Activated T-helper 2 cell treated with anti-CD3 and anti-CD28 coated beads, Interferon-gamma antibody, Interleukin-2, Interleukin-4, amounts not matched to agents 10 μg/mL and 5 μg/mL and 100 μg/mL, durations not matched to agents 14 hours and 24 hours and 36 hours (primary cell): ENCODE measurements at regions of chr5 and their contacts with region 1.

Region 1: GRCh38 chr5:112921833-112922817 is at the start of gene REEP5:
- DNase-seq: peak; percentile 84
- H3K4me3 Mint-ChIP-seq: peak within 1 kb of the TSS; percentile 93
- H3K27ac Mint-ChIP-seq: peak within 1 kb of the TSS; percentile 90
- H3K4me1 Mint-ChIP-seq: peaks cover 57% of the 10 kb centered on the region
- H3K27me3 Mint-ChIP-seq: no peaks in the 10 kb centered on the region
- total RNA-seq, gene REEP5: 83.4 and 85.6 TPM in 2 replicates

Region 2: GRCh38 chr5:112548246-112548881 is 373.8 kb before region 1 on chr5:
- intact Hi-C with region 1: no loop called
- DNase-seq: no peak
- H3K4me3 Mint-ChIP-seq: no peak overlapping the region
- H3K27ac Mint-ChIP-seq: no peak overlapping the region
- H3K4me1 Mint-ChIP-seq: no peaks in the 10 kb centered on the region
- H3K27me3 Mint-ChIP-seq: peaks cover 18% of the 10 kb centered on the region

Region 3: GRCh38 chr5:112707187-112708102 is 214.7 kb before region 1 on chr5:
- intact Hi-C with region 1: loop called (anchors 2 kb)
- DNase-seq: peak; percentile 98
- H3K4me3 Mint-ChIP-seq: peak overlapping the region; percentile 93
- H3K27ac Mint-ChIP-seq: peak overlapping the region; percentile 71
- H3K4me1 Mint-ChIP-seq: peaks cover 35% of the 10 kb centered on the region
- H3K27me3 Mint-ChIP-seq: peaks cover 3% of the 10 kb centered on the region

Region 4: GRCh38 chr5:112878760-112879159 is 43.4 kb before region 1 on chr5:
- intact Hi-C with region 1: loop called (anchors 2 kb)
- DNase-seq: peak; percentile 54
- H3K4me3 Mint-ChIP-seq: peak overlapping the region; percentile 9
- H3K27ac Mint-ChIP-seq: peak overlapping the region; percentile 71
- H3K4me1 Mint-ChIP-seq: peaks cover 35% of the 10 kb centered on the region
- H3K27me3 Mint-ChIP-seq: no peaks in the 10 kb centered on the region

Region 5: DNA sequence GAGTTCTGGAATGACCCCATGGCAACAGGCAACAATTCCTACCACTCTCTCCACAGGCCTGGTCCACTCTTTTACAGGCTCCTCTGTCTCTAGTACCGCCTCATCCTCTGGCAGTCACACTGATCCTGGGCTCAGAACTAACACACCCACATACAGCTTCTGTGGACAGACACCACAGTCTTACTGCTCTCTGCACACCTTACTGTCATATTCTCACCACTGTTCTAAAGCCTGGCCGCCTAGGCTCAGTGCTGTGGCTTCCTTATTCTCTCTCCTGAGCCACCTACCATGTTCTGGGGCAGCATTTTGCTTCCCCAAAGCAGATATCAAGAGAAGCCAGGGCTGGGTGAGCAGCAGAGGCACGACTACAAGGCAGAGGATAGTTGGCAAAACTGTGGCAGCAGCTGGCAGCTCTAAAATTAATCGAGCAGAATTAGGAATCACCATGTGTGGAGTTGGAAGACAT is 14.9 kb before region 1 on chr5:
- intact Hi-C with region 1: no loop called
- DNase-seq: no peak
- H3K4me3 Mint-ChIP-seq: no peak overlapping the region
- H3K27ac Mint-ChIP-seq: peak overlapping the region; percentile 17
- H3K4me1 Mint-ChIP-seq: peaks cover 25% of the 10 kb centered on the region
- H3K27me3 Mint-ChIP-seq: no peaks in the 10 kb centered on the region

Region 6: GRCh38 chr5:112976432-112977309 is 54.5 kb after region 1 on chr5 and contains the start of gene DCP2:
- intact Hi-C with region 1: loop called (anchors 2 kb)
- DNase-seq: peak; percentile 96
- H3K4me3 Mint-ChIP-seq: peak within 1 kb of the TSS; percentile 99
- H3K27ac Mint-ChIP-seq: peak within 1 kb of the TSS; percentile 95
- H3K4me1 Mint-ChIP-seq: peaks cover 39% of the 10 kb centered on the region
- H3K27me3 Mint-ChIP-seq: no peaks in the 10 kb centered on the region
- total RNA-seq, gene DCP2: 81.6 and 84.1 TPM in 2 replicates

Region 7: GRCh38 chr5:113034182-113034773 is 112.2 kb after region 1 on chr5:
- intact Hi-C with region 1: no loop called
- DNase-seq: no peak
- H3K4me3 Mint-ChIP-seq: no peak overlapping the region
- H3K27ac Mint-ChIP-seq: no peak overlapping the region
- H3K4me1 Mint-ChIP-seq: peaks cover 15% of the 10 kb centered on the region
- H3K27me3 Mint-ChIP-seq: no peaks in the 10 kb centered on the region